ENCODE measurements at regions of chr2 and their contacts with region 1.

Region 1: GRCh38 chr2:8472545-8473323 is 209.1 kb upstream of the ID2 start:
- DNase-seq: peak; percentile 38
- H3K4me3 Mint-ChIP-seq: peak overlapping the region; percentile 4
- H3K27ac Mint-ChIP-seq: peak overlapping the region; percentile 86
- H3K4me1 Mint-ChIP-seq: peaks cover 77% of the 10 kb centered on the region
- H3K27me3 Mint-ChIP-seq: no peaks in the 10 kb centered on the region

Region 2: DNA sequence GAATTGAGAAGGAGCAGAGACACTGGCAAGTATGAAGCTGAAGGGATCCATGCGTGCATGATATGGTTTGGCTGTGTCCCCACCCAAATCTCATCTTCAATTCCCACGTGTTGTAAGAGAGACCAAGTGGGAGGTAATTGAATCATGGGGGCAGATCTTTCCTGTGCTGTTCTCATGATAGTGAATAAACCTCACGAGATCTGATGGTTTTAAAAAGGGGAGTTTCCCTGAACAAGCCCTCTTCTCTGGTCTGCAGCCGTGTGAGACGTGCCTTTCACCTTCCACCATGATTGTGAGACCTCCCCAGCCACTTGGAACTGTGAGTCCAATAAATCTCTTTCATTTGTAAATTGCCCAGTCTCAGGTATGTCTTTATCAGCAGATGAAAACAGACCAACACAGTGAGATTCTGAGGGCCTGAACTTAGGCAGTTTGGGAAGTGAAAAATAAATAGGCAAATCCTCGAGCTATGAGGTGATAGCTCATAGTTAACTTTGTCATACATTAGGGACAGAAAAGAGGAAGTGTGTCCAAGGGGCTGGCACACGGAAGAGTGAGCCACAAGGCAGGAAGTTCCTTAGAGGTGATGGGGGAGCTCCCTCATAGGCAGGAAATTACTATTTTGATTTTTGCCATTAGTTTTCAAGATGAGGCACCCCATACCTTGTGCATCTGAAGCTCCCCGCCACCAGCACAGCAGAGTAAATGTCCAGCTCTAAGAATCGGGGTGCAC is 449.7 kb before region 1 on chr2:
- CTCF ChIA-PET with region 1: no interaction called
- POLR2A ChIA-PET with region 1: no interaction called
- DNase-seq: no peak
- H3K4me3 Mint-ChIP-seq: no peak overlapping the region
- H3K27ac Mint-ChIP-seq: no peak overlapping the region
- H3K4me1 Mint-ChIP-seq: peaks cover 10% of the 10 kb centered on the region
- H3K27me3 Mint-ChIP-seq: no peaks in the 10 kb centered on the region

Region 3: GRCh38 chr2:8453904-8454302 is 18.8 kb before region 1 on chr2:
- CTCF ChIA-PET with region 1: interaction called, 13 read pairs
- POLR2A ChIA-PET with region 1: no interaction called
- DNase-seq: no peak
- H3K4me3 Mint-ChIP-seq: no peak overlapping the region
- H3K27ac Mint-ChIP-seq: peak overlapping the region; percentile 15
- H3K4me1 Mint-ChIP-seq: peaks cover 37% of the 10 kb centered on the region
- H3K27me3 Mint-ChIP-seq: peaks cover 5% of the 10 kb centered on the region

Measured in activated CD4-positive, alpha-beta T cell treated with anti-CD3 and anti-CD28 coated beads, Interleukin-2, amount 10 ng/mL, durations not matched to agents 7 days and 5 days (primary cell).